CD4-positive, alpha-beta T cell (primary cell): ENCODE measurements at regions of chr6 and their contacts with region 1.

Region 1: DNA sequence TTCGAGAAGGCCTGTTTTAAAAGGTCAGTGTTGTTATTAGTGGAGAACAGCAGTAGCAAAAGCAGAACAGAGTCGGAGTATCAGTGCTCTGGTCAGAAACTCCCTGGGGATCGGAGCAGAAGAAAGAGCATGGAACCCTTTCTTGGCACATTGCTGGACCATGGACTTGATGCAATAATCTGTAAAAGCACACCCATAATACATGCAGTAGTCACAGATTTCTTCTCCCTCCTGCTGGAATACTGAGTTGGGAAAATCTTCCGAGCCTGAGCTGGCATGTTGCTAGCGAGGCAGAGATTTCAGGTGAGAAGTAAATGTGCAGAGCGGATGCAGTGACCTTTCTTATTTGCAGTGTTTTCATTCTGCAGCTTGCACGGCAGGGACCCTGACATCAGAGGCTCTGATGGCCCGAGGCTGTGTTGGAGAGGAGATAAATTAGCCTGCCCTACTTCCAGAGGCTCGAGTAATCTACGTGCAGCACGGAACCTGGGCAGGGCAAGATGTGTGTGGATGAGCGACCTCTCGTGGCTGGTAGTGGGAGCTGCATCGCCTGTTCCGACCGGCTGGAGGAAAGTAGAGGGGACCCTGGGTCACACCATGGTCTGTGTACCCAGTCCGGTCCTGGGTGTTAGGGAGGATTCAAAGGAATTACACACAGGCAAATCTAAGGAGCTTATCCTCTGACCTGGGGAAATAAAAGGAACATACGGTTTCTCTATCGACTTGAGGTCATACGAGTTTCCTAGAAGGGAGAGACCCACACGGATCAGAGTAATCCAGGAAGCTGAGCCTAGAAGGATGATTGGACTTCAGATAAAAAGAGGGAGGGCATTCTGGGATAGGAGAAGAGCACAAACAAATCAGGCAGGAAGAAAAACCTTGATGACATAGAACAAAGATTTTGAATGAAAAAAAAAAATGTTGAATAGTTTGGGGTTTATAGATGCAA is 137.0 kb upstream of the STMND1 start:
- DNase-seq: peak; percentile 28 to 77 (median 47)
- ATAC-seq: peak; percentile 94
- H3K4me3 ChIP-seq: no peak overlapping the region
- H3K4me3 Mint-ChIP-seq: no peak overlapping the region
- H3K27ac ChIP-seq: no peak overlapping the region
- H3K27ac Mint-ChIP-seq: no peak overlapping the region
- H3K4me1 ChIP-seq: peaks cover 5% of the 10 kb centered on the region
- H3K4me1 Mint-ChIP-seq: peaks cover 5% of the 10 kb centered on the region
- H3K27me3 ChIP-seq: peaks cover 3 to 5% of the 10 kb centered on the region in 2 experiments
- H3K27me3 Mint-ChIP-seq: peaks cover 7% of the 10 kb centered on the region
- CTCF ChIP-seq: peak; percentile 66

Region 2: DNA sequence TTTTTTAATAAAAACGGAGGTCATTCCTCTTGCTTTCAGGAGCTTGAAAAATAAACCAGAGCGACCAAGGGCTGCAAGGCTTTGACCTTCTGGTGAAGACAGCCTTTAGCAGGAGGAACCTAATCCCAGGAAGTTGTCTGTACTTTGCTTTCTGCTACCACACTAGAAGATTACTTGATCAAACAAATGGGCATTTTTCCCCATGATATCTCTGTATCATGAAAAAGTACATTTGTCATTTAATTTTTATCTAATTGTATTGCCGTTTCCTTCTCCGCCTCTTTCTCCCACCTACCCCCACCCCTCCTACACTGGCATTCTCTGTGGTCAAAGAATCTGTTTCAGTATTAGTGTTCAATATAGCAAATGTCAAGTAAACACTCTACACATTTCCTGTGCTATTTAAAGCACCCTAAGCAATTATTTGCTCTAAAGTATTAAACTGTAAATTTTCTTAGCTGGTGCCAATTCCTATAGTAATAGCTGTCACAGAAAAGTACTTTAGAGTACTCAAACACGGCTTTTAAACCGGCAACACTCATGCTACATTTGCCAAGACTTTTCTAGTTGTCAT is 233.3 kb before region 1 on chr6:
- CTCF ChIA-PET with region 1: no interaction called
- POLR2A ChIA-PET with region 1: no interaction called
- intact Hi-C with region 1: loop called in 1 of 2 experiments (anchors 10 kb)
- DNase-seq: peak in 4 of 14 experiments; percentile 26 to 74 (median 47)
- ATAC-seq: peak; percentile 59
- H3K4me3 ChIP-seq: peak overlapping the region; percentile 21
- H3K4me3 Mint-ChIP-seq: peak overlapping the region; percentile 45
- H3K27ac ChIP-seq: peak overlapping the region in 1 of 2 donors; percentile 47
- H3K27ac Mint-ChIP-seq: peak overlapping the region; percentile 13
- H3K4me1 ChIP-seq: peaks cover 27% of the 10 kb centered on the region
- H3K4me1 Mint-ChIP-seq: peaks cover 49% of the 10 kb centered on the region
- H3K27me3 ChIP-seq: no peaks in the 10 kb centered on the region
- H3K27me3 Mint-ChIP-seq: no peaks in the 10 kb centered on the region
- CTCF ChIP-seq: no peak

Region 3: DNA sequence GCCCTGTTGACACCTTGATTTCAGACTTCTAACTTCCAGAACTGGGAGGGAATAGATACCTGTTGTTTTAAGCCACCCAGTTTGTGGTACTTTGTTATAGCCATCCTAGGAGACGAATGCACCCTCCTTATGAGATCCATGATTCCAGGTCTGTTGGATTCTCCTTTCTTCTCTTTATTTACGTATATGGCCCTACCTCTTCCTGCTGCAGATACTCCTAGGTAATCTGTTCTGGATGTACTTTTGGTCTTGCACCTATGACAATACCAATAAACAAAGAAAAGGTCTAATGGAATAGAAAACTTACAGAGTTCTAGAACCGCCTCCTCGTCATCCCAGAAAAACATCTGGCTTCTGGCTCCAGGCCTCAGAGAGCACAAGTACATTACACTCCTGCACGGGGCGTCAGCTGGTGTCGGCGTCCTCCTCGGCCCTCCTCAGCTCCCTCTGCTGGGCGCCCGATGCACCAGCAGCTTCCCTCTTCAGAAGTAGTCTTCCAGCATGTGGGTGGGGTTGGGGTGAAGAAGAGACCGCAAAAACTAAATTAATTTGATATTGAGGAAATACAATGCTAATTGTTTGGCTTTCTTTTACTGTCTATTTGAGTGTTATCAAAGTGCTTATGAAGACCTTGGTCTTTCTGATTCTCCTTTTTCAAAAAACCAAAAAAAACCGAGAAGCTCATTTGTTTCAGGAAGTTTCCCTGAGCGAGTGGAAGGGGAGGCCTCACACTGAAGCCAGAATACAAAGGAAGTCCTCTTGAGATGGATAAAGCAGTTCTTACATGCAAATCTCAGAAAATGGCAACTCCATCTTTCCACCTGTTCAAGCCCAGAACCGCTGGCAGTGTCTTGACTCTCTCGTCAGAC is 193.9 kb before region 1 on chr6:
- CTCF ChIA-PET with region 1: no interaction called
- POLR2A ChIA-PET with region 1: no interaction called
- intact Hi-C with region 1: loop called in 1 of 2 experiments (anchors 5 kb)
- DNase-seq: peak; percentile 65 to 90 (median 73)
- ATAC-seq: peak; percentile 79
- H3K4me3 ChIP-seq: no peak overlapping the region
- H3K4me3 Mint-ChIP-seq: no peak overlapping the region
- H3K27ac ChIP-seq: no peak overlapping the region
- H3K27ac Mint-ChIP-seq: peak overlapping the region; percentile 40
- H3K4me1 ChIP-seq: peaks cover 20% of the 10 kb centered on the region
- H3K4me1 Mint-ChIP-seq: peaks cover 45% of the 10 kb centered on the region
- H3K27me3 ChIP-seq: no peaks in the 10 kb centered on the region
- H3K27me3 Mint-ChIP-seq: no peaks in the 10 kb centered on the region
- CTCF ChIP-seq: peak; percentile 96

Region 4: DNA sequence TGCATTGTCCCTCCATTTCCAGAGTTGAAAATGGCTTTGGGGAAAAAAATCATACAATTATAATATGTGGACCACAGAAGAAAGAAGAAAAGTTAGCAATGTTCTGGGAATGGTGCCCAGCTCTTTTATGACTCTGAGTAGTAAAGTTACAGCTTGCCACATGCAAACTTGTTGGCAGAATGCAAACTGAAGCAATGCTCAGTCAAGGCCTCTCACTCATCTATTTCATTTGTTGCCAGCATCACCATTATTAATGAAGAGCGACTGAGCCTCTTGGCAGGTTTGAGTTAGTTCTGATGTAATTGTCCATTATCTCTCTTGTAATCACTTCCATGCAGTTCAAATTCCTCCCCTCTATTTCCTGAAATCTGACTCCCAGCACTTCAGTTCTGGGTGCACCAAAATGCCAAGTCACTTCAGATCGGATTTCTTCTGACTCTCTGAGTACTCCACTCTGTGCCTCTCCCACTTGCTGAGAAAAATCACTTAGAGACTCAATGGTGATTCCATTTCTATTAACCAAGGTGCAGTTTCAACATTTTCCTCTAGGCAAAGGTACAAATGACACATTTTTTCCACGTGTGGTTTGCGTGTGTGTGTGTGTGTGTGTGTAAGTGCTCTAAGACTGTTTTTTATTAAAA is 17.3 kb before region 1 on chr6:
- CTCF ChIA-PET with region 1: no interaction called
- POLR2A ChIA-PET with region 1: no interaction called
- intact Hi-C with region 1: no loop called
- DNase-seq: peak in 1 of 14 experiments; percentile 16
- ATAC-seq: no peak
- H3K4me3 ChIP-seq: no peak overlapping the region
- H3K4me3 Mint-ChIP-seq: no peak overlapping the region
- H3K27ac ChIP-seq: no peak overlapping the region
- H3K27ac Mint-ChIP-seq: no peak overlapping the region
- H3K4me1 ChIP-seq: no peaks in the 10 kb centered on the region
- H3K4me1 Mint-ChIP-seq: no peaks in the 10 kb centered on the region
- H3K27me3 ChIP-seq: no peaks in the 10 kb centered on the region
- H3K27me3 Mint-ChIP-seq: peaks cover 22% of the 10 kb centered on the region
- CTCF ChIP-seq: no peak